Mammary epithelial cell (primary cell): ENCODE measurements at regions of chr11 and their contacts with region 1.

Region 1: DNA sequence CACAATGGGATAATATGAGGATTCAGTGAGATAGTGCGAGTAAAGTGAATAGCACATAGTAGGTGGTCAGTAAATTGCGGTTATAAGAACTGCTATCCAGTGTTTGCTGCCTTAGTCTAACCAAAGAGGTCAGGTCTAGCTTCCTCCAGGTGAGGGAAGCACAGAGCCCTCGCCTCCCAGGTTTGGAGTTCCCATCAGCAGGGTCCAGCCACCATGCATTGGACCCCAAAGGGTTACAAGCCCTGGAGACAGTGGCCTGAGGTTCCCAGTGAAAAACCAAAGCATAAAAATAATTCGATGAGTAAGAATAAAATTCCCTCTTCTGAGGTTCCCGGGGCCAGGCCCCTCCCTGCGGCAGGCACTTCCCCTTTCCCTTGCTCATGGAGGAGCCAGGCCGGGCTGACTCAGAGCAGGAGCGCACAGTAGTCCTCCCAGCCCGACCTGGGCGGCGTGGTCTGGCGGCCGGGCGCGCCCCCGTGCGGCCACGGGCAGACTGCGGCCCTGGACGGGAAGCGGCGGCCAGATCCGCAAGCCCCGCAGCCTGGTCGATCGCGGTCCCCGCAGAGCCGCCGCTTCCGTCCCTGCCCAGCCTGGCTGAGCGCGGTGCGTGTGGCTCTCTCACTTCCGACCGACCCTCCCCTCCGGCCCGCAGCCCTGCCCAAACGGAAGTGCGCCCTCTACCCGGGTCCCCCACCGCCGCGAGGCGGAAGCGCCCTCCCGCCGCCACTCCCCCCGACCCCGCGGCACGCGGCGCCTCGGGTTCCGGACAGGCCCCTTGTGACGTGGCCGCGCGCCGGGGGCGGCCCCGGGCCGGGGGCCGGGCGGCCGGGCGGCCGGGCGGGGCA is at the start of gene SLC39A13:
- DNase-seq: peak; percentile 96
- H3K4me3 ChIP-seq: peak within 1 kb of the TSS; percentile 68 to 79 (median 70)
- H3K27ac ChIP-seq: peak within 1 kb of the TSS; percentile 88
- H3K4me1 ChIP-seq: peaks cover 30% of the 10 kb centered on the region
- H3K27me3 ChIP-seq: no peaks in the 10 kb centered on the region
- CTCF ChIP-seq: peak; percentile 61 to 72
- total RNA-seq, gene SLC39A13: 55.5 to 97.2 TPM

Region 2: DNA sequence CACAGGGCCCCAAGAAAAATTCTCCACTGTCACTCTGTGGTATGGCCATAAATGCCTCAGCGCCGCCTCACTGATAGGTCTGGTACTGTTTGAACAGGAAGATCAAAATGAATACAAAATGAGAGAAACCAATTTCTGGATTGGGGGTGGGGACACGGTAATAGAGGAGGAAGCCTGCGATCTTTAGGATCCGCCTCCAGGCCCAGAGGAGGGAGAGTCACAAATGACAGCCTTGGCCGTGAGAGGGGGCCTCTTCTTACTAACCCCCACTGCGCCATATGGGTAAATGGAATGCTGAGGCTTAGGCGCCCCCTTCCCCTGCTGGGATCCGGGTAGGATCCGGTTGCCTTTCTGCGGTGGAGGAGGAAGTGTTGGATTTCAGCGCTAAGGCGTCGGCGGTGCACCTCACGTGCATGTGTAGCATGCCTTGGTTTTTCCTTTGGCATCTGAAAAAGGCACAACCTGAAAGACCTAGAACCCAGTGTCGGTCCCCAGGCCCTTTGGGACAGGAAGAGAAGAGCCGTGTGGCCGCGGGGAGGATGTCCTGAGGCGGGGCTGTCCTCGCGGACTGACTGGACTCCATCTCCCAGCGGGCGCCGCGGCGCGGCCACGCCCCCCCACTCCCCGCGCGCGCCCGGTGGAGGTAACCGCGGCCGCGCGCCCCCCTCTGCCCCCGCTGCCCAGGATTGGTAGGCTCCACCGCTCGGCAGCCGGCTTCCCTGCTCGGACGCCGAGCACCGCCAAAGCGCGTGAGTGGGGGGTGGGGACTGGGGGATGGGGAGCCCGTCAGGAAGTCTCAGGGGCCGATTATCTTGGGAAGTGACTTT is 138.8 kb before region 1 on chr11:
- CTCF ChIA-PET with region 1: no interaction called
- dilution Hi-C with region 1: no loop called
- in situ Hi-C with region 1: no loop called
- intact Hi-C with region 1: loop called (anchors 2 kb)
- DNase-seq: peak; percentile 80
- H3K4me3 ChIP-seq: peak overlapping the region; percentile 58 to 87 (median 87)
- H3K27ac ChIP-seq: peak overlapping the region; percentile 61
- H3K4me1 ChIP-seq: peaks cover 21% of the 10 kb centered on the region
- H3K27me3 ChIP-seq: no peaks in the 10 kb centered on the region
- CTCF ChIP-seq: peak in 1 of 2 donors; percentile 12

Region 3: GRCh38 chr11:47426061-47426956 is 18.3 kb after region 1 on chr11 and contains the start of gene PSMC3:
- CTCF ChIA-PET with region 1: no interaction called
- dilution Hi-C with region 1: no loop called
- in situ Hi-C with region 1: no loop called
- intact Hi-C with region 1: loop called (anchors 1 kb)
- DNase-seq: peak; percentile 95
- H3K4me3 ChIP-seq: peak within 1 kb of the TSS; percentile 88 to 99 (median 97)
- H3K27ac ChIP-seq: peak within 1 kb of the TSS; percentile 94
- H3K4me1 ChIP-seq: peaks cover 14% of the 10 kb centered on the region
- H3K27me3 ChIP-seq: no peaks in the 10 kb centered on the region
- CTCF ChIP-seq: no peak
- total RNA-seq, gene PSMC3: 72.7 to 142 TPM

Region 4: DNA sequence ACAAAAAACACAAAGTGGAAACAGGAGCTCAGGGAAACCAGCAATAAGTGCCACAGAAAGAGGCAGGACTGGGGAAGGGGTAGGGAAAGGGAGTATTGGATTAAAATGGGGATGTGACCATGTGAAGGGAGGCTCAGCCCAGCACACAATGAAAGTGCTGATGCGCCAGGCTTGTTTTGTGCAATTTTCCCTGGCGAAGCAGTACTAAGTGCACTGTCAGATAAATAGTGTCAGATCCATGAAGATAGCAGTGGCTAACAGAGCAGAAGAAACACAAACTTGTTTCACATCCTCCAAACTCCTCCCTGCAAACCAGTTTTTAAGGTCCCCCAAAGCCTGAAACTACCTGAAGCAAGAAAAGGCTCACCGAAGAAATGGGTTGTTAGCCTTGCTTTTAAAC is 91.6 kb after region 1 on chr11:
- CTCF ChIA-PET with region 1: no interaction called
- dilution Hi-C with region 1: no loop called
- in situ Hi-C with region 1: no loop called
- intact Hi-C with region 1: no loop called
- DNase-seq: no peak
- H3K4me3 ChIP-seq: no peak overlapping the region
- H3K27ac ChIP-seq: no peak overlapping the region
- H3K4me1 ChIP-seq: no peaks in the 10 kb centered on the region
- H3K27me3 ChIP-seq: no peaks in the 10 kb centered on the region
- CTCF ChIP-seq: no peak